ENCODE measurements at regions of chr2 and their contacts with region 1.

Region 1: GRCh38 chr2:232592772-232593395 is 40.5 kb upstream of the EFHD1 start:
- DNase-seq: no peak
- H3K4me3 ChIP-seq: no peak overlapping the region
- H3K27ac ChIP-seq: peak overlapping the region; percentile 31
- H3K27me3 ChIP-seq: no peaks in the 10 kb centered on the region
- CTCF ChIP-seq: peak; percentile 11; the same call in 1 of the 2 replicates

Region 2: DNA sequence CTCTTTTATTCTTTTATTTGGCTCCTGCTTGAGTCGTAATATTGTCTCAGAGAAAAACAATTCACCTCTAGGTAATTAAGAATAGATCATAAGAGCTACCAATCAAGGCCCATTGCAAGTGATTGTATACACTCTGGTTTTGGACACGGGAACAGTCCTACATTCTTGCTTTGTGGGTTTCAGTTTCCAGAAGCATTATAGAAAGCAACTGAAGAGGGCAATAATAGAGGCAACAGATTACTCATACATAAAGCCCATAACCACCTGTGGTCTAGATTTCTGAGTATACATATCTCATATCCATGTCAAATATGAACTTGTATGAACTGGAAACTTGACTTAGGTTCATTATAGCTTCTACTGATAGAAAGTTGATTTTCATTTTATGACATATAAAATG is 566.0 kb before region 1 on chr2:
- CTCF ChIA-PET with region 1: no interaction called
- POLR2A ChIA-PET with region 1: no interaction called
- DNase-seq: no peak
- H3K4me3 ChIP-seq: no peak overlapping the region
- H3K27ac ChIP-seq: no peak overlapping the region
- H3K27me3 ChIP-seq: no peaks in the 10 kb centered on the region
- CTCF ChIP-seq: no peak

Region 3: DNA sequence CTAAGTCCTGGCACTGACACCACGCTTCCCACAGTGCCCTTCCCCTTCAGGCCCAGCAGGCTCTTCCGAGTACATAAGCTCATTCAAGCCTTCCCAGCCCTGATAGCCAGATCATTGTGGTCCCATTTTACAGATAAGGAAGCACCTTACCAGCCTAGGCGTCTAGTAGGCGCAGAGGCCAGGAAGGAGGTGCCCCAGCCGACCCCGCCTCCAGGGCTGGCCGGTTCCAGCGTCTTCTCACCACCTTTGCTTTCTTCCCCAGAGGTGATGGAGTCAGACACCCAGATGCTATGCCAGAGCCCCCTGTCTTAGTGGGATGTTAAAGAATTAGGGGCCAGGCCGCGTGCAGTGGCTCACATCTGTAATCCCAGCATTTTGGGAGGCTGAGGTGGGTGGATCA is 11.7 kb after region 1 on chr2:
- CTCF ChIA-PET with region 1: interaction called, 11 read pairs
- POLR2A ChIA-PET with region 1: no interaction called
- DNase-seq: no peak
- H3K4me3 ChIP-seq: no peak overlapping the region
- H3K27ac ChIP-seq: no peak overlapping the region
- H3K27me3 ChIP-seq: peaks cover 8% of the 10 kb centered on the region
- CTCF ChIP-seq: no peak